ENCODE measurements at regions of chr11 and their contacts with region 1.

Region 1: DNA sequence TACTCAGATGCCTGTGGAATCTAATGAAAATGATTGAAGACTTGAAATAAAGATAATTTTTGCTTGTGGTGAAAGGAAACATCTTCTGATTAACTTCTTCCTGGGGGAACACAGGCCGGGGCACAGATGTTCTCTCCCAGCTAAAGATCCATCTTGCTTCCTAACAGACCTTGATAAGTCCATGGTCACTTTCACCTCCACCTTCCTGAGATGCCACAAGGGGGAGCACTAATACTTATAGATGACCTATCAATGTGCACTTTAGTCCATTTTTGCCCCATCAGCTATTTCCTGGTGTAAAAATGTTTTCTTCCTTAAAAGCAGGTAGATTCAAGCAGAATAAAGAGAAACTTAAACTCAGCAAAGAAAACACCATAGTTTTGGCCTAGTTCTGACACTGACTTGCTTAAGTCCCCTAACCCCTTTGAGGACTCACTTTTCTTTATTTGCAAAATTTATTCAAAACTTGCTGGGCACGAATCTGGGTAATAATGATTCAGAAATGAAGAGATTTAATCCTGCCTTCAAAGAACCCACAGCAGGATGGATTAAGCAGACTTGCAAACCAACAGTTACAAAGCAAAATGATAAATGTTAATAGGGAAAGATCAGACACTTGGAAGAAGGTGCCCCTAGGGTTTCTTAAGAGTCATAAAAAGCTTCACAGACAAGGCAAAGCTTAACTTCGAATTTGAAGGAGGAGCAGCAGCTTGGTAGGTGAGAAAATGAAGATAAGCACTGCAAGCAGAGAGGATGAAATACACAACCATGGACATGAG is 158.7 kb downstream of the RAB38 start:
- DNase-seq: peak; percentile 28
- H3K4me3 ChIP-seq: no peak overlapping the region
- H3K27ac ChIP-seq: no peak overlapping the region
- H3K4me1 ChIP-seq: no peaks in the 10 kb centered on the region
- H3K27me3 ChIP-seq: no peaks in the 10 kb centered on the region
- CTCF ChIP-seq: peak; percentile 83
- EP300 ChIP-seq: no peak
- RAD21 ChIP-seq: peak; percentile 79

Region 2: DNA sequence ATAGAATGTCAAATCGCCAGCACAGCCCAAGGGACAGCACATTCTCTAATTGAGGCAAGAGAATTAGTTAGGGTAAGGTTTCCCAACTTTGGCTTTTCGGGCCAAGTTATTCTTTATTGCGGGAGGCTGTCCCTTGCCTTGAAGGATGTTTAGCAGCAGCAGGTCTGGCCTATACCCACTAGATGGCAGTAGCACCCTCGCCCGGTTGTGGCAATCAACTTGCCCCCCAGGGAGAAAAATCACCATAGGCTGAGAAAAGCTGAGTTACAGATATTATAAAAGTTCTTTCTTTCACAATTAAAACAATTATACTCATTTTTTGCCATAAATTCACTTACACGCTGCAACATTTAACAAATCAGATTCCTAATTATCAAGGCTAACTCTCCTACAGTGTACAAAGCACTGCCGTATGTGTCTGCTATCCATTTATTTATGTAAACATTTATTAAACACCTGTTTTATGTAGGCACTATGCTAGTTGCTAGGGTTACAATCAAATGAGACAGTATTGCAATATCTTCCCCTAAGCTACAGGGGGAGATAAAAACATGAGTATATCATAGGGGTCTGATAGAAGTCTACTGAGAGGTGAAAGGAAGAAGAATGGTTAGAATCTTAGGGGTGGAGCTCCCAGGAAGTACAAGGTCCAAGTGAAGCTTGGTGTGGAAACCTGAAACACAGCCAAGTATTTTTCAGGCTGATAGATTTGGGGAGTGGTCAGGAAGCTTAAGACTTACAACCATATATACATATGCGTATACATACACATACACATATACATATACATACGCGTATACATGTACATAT is 293.6 kb before region 1 on chr11:
- CTCF ChIA-PET with region 1: no interaction called
- POLR2A ChIA-PET with region 1: no interaction called
- DNase-seq: peak; percentile 5
- H3K4me3 ChIP-seq: no peak overlapping the region
- H3K27ac ChIP-seq: no peak overlapping the region
- H3K4me1 ChIP-seq: no peaks in the 10 kb centered on the region
- H3K27me3 ChIP-seq: no peaks in the 10 kb centered on the region; the same call in 1 of the 2 replicates
- CTCF ChIP-seq: peak; percentile 81
- EP300 ChIP-seq: no peak
- RAD21 ChIP-seq: peak; percentile 35

Region 3: GRCh38 chr11:87926250-87926970 is 90.2 kb before region 1 on chr11:
- CTCF ChIA-PET with region 1: no interaction called
- POLR2A ChIA-PET with region 1: no interaction called
- DNase-seq: no peak
- H3K4me3 ChIP-seq: no peak overlapping the region
- H3K27ac ChIP-seq: no peak overlapping the region
- H3K4me1 ChIP-seq: no peaks in the 10 kb centered on the region
- H3K27me3 ChIP-seq: no peaks in the 10 kb centered on the region
- CTCF ChIP-seq: no peak
- EP300 ChIP-seq: no peak
- RAD21 ChIP-seq: no peak

Region 4: GRCh38 chr11:88535916-88536547 is 519.5 kb after region 1 on chr11:
- CTCF ChIA-PET with region 1: interaction called, 37 read pairs
- POLR2A ChIA-PET with region 1: no interaction called
- DNase-seq: no peak
- H3K4me3 ChIP-seq: no peak overlapping the region
- H3K27ac ChIP-seq: peak overlapping the region; percentile 47 to 93; a peak in 3 of 4 replicates
- H3K4me1 ChIP-seq: peaks cover 0 to 28% of the 10 kb centered on the region in 2 experiments; a peak in 2 of 4 replicates
- H3K27me3 ChIP-seq: no peaks in the 10 kb centered on the region
- CTCF ChIP-seq: no peak
- EP300 ChIP-seq: peak in 1 of 2 experiments; percentile 81; a peak in 2 of 4 replicates
- RAD21 ChIP-seq: no peak

Region 5: GRCh38 chr11:88543902-88544655 is 527.5 kb after region 1 on chr11:
- CTCF ChIA-PET with region 1: interaction called, 37 read pairs
- POLR2A ChIA-PET with region 1: no interaction called
- DNase-seq: peak; percentile 48
- H3K4me3 ChIP-seq: peak overlapping the region in 1 of 2 experiments; percentile 33; a peak in 1 of 4 replicates
- H3K27ac ChIP-seq: no peak overlapping the region
- H3K4me1 ChIP-seq: no peaks in the 10 kb centered on the region
- H3K27me3 ChIP-seq: no peaks in the 10 kb centered on the region
- CTCF ChIP-seq: peak; percentile 99
- EP300 ChIP-seq: no peak
- RAD21 ChIP-seq: peak; percentile 100

Region 6: DNA sequence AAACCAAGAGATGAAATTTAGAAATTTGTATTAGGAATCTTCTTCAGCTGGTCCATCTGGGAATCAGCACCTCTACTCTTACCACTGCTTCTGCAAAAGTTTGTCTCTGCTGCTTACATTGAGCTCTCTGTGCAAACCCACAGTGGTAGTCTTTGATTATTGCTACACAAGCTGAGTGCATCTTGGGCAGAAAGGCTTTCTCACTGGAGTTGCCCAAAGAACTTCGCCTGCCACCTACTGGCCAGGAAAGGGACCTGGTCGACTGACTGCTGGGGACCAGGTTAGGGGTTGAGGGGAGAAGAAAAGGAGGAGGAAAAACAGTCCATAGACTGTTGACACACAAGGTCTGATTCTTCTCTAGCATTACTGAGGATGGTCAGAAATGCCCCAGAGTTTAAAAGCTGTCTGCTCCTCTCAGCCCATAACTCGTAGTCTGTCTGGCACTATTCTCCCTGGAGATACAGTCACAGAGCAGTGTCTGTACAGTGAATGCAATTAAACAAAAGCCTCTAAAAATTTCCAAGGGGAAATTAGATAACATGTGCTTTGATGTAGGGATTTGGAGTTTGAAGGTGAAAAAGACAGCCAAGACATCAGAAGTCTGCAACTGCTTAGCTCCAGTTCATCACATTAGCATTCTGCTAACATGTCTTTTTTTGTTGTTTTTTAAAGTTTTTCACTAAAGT is 535.9 kb after region 1 on chr11:
- CTCF ChIA-PET with region 1: interaction called, 16 read pairs
- POLR2A ChIA-PET with region 1: no interaction called
- DNase-seq: peak; percentile 23
- H3K4me3 ChIP-seq: no peak overlapping the region
- H3K27ac ChIP-seq: no peak overlapping the region; a peak in 1 of 4 replicates
- H3K4me1 ChIP-seq: peaks cover 0 to 9% of the 10 kb centered on the region in 2 experiments; a peak in 1 of 4 replicates
- H3K27me3 ChIP-seq: no peaks in the 10 kb centered on the region
- CTCF ChIP-seq: peak; percentile 70
- EP300 ChIP-seq: no peak
- RAD21 ChIP-seq: peak; percentile 67